ENCODE measurements at regions of chr19 and their contacts with region 1.

Region 1: GRCh38 chr19:45717166-45717982 is 13.3 kb downstream of the FBXO46 start:
- DNase-seq: peak; percentile 100
- H3K4me3 ChIP-seq: peak overlapping the region; percentile 60 to 82 (median 69)
- H3K27ac ChIP-seq: peak overlapping the region; percentile 87 to 95 (median 88)
- H3K4me1 ChIP-seq: peaks cover 0 to 19% (median 17%) of the 10 kb centered on the region in 4 donors
- H3K27me3 ChIP-seq: no peaks in the 10 kb centered on the region
- CTCF ChIP-seq: peak in 1 of 4 experiments; percentile 29
- EP300 ChIP-seq: peak in 1 of 4 donors; percentile 79
- POLR2A ChIP-seq: peak; percentile 32 to 37

Region 2: GRCh38 chr19:45591004-45591637 is 126.3 kb before region 1 on chr19:
- intact Hi-C with region 1: no loop called
- DNase-seq: no peak
- H3K4me3 ChIP-seq: no peak overlapping the region
- H3K27ac ChIP-seq: no peak overlapping the region
- H3K4me1 ChIP-seq: no peaks in the 10 kb centered on the region
- H3K27me3 ChIP-seq: peaks cover 0 to 55% (median 30%) of the 10 kb centered on the region in 3 donors
- CTCF ChIP-seq: no peak
- EP300 ChIP-seq: no peak
- POLR2A ChIP-seq: no peak

Region 3: DNA sequence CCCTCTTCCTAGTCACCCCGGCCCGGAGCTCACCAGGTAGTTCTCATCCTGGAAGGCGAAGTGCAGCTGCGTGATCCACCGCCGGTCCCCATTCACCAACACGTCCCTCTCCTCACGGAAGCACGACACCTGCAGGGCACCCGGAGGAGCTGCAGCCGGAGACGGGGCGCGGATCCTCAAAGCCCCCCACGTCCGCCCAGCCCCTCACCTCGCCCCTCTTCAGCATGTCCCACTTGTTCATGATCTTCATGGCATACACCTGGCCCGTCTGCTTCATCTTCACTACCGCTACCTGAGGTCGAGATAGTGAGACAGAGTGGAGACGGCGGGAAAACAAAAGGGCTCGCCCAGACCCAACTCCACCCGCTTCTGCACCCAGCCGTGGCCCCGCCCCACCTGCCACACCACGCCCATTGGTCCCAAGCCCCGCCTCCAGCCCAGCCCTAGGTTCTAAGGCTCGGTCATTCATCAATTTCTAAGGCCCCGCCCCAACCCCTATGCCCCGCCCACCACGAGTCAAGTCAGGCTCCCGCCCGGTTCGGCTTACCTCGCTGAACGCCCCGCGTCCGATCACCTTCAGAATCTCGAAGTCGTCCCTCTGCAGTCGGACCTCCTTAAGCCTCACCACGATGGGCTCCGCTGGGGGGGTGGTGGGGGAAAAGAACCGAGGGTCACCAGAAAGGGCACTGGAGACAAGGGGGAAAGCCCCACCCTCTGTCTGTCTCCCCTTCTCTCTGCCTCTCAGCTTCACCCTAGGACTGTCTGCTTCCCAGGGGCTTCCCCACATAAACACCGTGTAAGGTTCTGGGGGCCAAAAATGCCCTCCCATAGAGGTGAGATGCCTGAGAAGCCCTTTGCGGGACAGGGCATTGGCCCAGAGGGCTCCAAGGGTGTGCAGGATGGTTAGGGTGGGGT is 62.1 kb after region 1 on chr19:
- intact Hi-C with region 1: loop called (anchors 1 kb)
- DNase-seq: peak; percentile 96
- H3K4me3 ChIP-seq: peak overlapping the region; percentile 19 to 94 (median 88)
- H3K27ac ChIP-seq: peak overlapping the region; percentile 96 to 98 (median 98)
- H3K4me1 ChIP-seq: peaks cover 0 to 59% (median 49%) of the 10 kb centered on the region in 4 donors
- H3K27me3 ChIP-seq: no peaks in the 10 kb centered on the region
- CTCF ChIP-seq: peak; percentile 70 to 82 (median 77)
- EP300 ChIP-seq: no peak
- POLR2A ChIP-seq: peak in 1 of 2 donors; percentile 7

Region 4: GRCh38 chr19:45824041-45824471 is 106.7 kb after region 1 on chr19:
- intact Hi-C with region 1: no loop called
- DNase-seq: no peak
- H3K4me3 ChIP-seq: no peak overlapping the region
- H3K27ac ChIP-seq: peak overlapping the region in 1 of 4 donors; percentile 18
- H3K4me1 ChIP-seq: peaks cover 0 to 8% (median 0%) of the 10 kb centered on the region in 4 donors
- H3K27me3 ChIP-seq: no peaks in the 10 kb centered on the region
- CTCF ChIP-seq: no peak
- EP300 ChIP-seq: no peak
- POLR2A ChIP-seq: no peak